ENCODE measurements at regions of chr14 and their contacts with region 1.

Region 1: DNA sequence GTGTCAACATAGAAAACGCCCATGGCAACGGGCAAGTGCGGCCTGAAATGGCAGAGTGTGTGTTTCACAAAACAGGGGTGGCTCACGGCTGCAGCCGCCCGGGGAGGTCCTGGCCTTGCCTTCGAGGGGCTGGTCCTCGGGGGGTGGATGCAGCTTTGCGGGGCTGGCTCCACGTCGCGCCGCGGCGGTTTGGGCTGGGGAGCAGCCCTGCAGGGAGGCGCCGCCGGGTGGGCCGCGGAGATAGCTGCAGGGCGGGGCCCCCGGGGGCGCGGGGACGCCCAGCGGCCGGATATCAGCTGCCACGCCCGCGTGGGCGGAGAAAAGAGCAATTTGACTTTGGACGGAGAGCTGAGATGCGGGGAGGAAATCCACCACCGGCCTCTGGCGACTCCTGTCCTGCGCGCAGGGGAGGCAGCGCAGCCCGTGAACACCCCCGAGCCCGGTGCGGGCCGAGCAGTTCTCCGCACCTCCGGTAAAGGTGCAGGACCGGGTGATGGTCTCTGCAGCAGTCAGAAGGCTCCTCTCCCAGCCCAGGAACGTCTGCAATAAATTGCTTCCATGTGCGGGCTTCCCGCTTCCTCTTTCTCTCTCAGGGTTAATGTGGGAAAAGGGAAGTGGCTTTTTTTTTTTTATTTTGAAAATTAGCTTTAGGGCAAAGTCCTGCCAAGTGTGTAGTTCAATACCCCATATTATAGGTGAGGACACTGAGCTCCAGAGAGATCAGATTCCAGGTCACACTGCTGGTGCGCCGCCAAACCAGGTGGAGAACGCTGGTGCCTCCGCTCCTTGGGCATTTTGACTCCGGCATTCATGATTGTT is 110.5 kb downstream of the ARF6 start:
- DNase-seq: peak; percentile 88
- H3K4me3 Mint-ChIP-seq: peak overlapping the region; percentile 77
- H3K27ac Mint-ChIP-seq: peak overlapping the region; percentile 98
- H3K4me1 Mint-ChIP-seq: peaks cover 76% of the 10 kb centered on the region
- H3K27me3 Mint-ChIP-seq: no peaks in the 10 kb centered on the region

Region 2: GRCh38 chr14:49862089-49862673 is 141.2 kb before region 1 on chr14:
- CTCF ChIA-PET with region 1: interaction called, 134 read pairs
- POLR2A ChIA-PET with region 1: interaction called, 327 read pairs
- DNase-seq: peak; percentile 91
- H3K4me3 Mint-ChIP-seq: no peak overlapping the region
- H3K27ac Mint-ChIP-seq: no peak overlapping the region
- H3K4me1 Mint-ChIP-seq: peaks cover 29% of the 10 kb centered on the region
- H3K27me3 Mint-ChIP-seq: no peaks in the 10 kb centered on the region

Region 3: GRCh38 chr14:49898485-49898884 is 104.9 kb before region 1 on chr14:
- CTCF ChIA-PET with region 1: interaction called, 10 read pairs
- POLR2A ChIA-PET with region 1: interaction called, 174 read pairs
- DNase-seq: no peak
- H3K4me3 Mint-ChIP-seq: peak overlapping the region; percentile 73
- H3K27ac Mint-ChIP-seq: peak overlapping the region; percentile 78
- H3K4me1 Mint-ChIP-seq: peaks cover 31% of the 10 kb centered on the region
- H3K27me3 Mint-ChIP-seq: no peaks in the 10 kb centered on the region

Region 4: GRCh38 chr14:49924852-49925251 is 78.6 kb before region 1 on chr14:
- CTCF ChIA-PET with region 1: no interaction called
- POLR2A ChIA-PET with region 1: no interaction called
- DNase-seq: no peak
- H3K4me3 Mint-ChIP-seq: no peak overlapping the region
- H3K27ac Mint-ChIP-seq: no peak overlapping the region
- H3K4me1 Mint-ChIP-seq: peaks cover 5% of the 10 kb centered on the region
- H3K27me3 Mint-ChIP-seq: no peaks in the 10 kb centered on the region

Region 5: DNA sequence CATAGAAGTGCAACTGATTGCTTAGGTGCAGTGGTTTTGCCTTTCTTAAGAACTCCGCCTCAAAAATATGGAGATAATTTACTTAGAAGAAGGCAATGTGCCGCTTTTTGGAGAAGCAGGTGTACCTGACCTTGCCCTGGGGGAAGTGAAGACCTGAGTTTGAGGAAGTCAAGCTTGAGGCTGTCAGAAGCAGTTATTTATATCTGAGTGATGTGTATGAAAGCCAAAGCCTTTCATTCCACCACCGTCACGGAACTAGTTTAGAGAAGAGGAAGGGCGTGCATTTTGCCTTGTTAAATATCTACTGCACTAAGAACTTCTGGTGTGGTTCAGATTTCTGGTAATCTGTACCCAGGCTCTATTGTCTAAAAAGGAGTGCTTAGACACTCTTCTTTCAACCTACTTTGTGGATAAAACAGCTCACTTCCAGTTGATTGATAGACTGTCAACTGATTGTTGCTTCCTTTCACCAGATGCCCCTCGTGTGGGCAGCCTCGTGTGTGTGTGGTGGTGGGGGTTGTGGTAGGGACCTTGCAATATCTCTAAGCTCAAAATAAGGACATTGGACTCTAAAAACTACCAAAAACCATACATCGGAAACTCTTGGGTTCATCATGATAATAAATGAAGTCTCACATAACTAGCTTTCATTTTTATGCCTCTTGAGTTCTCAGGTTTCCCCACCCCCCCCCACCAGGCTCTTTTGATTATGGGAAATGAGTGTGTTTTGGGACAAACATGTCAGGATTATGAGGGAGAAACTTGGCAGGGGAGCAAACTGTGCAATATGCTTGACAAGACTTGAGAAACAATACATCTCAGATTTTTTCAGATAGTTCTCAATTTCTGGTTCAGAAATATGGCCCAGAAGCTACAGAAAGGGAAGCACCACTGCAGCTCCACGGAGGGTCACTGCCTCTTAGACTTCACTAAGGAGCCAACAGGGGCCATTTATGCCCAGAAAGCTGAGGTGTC is 32.0 kb before region 1 on chr14:
- CTCF ChIA-PET with region 1: interaction called, 70 read pairs
- POLR2A ChIA-PET with region 1: interaction called, 630 read pairs
- DNase-seq: peak; percentile 63
- H3K4me3 Mint-ChIP-seq: peak overlapping the region; percentile 72
- H3K27ac Mint-ChIP-seq: peak overlapping the region; percentile 98
- H3K4me1 Mint-ChIP-seq: peaks cover 57% of the 10 kb centered on the region
- H3K27me3 Mint-ChIP-seq: no peaks in the 10 kb centered on the region

Region 6: GRCh38 chr14:50038398-50039119 is 35.1 kb after region 1 on chr14:
- CTCF ChIA-PET with region 1: interaction called, 59 read pairs
- POLR2A ChIA-PET with region 1: interaction called, 209 read pairs
- DNase-seq: peak; percentile 70
- H3K4me3 Mint-ChIP-seq: peak overlapping the region; percentile 79
- H3K27ac Mint-ChIP-seq: peak overlapping the region; percentile 98
- H3K4me1 Mint-ChIP-seq: peaks cover 83% of the 10 kb centered on the region
- H3K27me3 Mint-ChIP-seq: no peaks in the 10 kb centered on the region

Region 7: GRCh38 chr14:50099335-50099734 is 95.9 kb after region 1 on chr14:
- CTCF ChIA-PET with region 1: interaction called, 7 read pairs
- POLR2A ChIA-PET with region 1: interaction called, 39 read pairs
- DNase-seq: no peak
- H3K4me3 Mint-ChIP-seq: no peak overlapping the region
- H3K27ac Mint-ChIP-seq: no peak overlapping the region
- H3K4me1 Mint-ChIP-seq: peaks cover 46% of the 10 kb centered on the region
- H3K27me3 Mint-ChIP-seq: peaks cover 8% of the 10 kb centered on the region

Measured in activated CD4-positive, alpha-beta memory T cell treated with anti-CD3 and anti-CD28 coated beads, Interleukin-2, amount 10 ng/mL, durations not matched to agents 7 days and 5 days (primary cell).